ENCODE measurements at regions of chr19 and their contacts with region 1.

Region 1: DNA sequence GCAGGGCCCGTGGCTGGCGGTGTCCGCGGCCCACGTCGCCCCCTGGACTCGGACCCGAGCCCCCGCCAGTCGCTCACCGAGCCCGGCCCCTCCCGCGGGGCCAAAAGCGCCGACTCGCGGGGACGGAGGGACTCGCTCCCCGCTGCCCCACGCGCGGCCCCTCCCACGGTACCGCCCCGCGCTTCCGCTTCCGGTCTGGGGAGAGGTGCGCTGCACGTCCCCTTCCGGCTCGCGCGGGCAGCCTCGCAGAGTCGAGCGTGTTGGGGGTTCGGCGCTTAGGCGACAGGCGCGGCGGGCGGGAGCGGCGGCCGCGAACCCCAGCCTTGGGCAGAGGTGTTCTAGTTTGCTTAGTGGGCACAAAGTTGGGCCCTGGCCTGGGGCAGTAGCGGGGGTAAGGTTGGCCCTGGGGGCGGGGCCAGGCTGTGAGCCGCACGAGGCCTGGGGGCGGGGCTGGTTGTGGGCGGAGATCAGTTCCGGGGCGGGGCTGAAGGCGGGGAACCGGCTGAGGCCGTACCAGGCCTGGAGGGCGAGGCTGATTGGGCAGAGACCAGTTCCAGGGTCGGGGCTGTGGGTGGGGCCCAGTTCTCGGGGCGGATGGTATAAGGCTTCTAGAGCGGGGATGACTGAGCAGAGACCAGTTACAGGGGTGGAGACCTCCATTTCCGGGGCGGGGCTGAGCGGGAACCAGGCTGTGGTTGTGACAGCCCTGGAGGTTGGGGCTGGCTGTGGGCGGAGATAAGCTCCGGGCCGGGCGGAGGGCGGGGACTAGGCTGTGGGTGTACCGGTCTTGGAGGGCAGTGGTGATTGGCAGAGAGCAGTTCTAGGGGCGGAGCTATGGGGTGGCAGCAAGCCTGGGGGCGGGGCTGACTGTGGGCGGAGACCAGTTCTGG is at the starts of genes MBD3L1 and ZNF558:
- DNase-seq: peak; percentile 100
- H3K4me3 Mint-ChIP-seq: peak within 1 kb of the TSS; percentile 82
- H3K27ac Mint-ChIP-seq: peak within 1 kb of the TSS; percentile 86
- H3K4me1 Mint-ChIP-seq: peaks cover 19% of the 10 kb centered on the region
- H3K27me3 Mint-ChIP-seq: no peaks in the 10 kb centered on the region
- total RNA-seq, gene MBD3L1: not detected
- total RNA-seq, gene ZNF558: 23.9 to 24.4 TPM

Region 2: DNA sequence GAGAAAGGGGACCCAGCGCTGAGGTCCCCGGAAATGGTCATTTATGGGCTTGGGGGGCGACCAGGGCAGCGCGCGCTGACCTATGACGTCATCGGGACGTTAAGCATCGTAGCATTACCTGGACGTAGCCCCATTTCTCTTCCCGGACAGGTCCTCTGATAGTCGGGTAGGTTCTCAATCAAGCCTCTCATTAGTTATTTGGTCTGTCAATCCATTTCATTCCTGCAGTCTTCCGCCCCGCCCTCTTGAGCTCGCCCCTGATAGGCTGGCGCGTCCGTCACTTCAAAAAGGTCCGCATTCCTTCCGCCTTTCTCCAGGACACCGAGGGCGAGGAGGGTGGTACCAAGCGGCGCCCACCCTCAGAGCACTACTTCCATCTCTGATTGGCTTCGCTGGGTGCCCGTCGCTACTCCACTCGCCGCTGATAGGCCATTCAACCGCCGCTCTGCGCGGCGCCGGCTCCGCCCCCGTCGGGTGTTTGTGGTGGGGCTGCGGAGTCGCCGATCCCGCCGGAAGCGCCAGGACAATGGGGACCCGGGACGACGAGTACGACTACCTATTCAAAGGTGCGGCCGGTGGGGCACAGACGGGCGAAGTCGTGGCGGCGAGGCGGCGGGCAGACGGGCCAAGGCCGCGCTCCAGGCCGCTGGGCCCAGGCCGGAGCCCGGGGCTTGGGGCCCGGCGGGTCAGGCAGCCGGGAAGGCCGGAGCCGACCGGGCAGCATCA is 442.3 kb before region 1 on chr19 and contains the start of gene RAB11B:
- CTCF ChIA-PET with region 1: no interaction called
- intact Hi-C with region 1: loop called (anchors 1 kb)
- DNase-seq: peak; percentile 100
- H3K4me3 Mint-ChIP-seq: peak within 1 kb of the TSS; percentile 93
- H3K27ac Mint-ChIP-seq: peak within 1 kb of the TSS; percentile 96
- H3K4me1 Mint-ChIP-seq: peaks cover 25% of the 10 kb centered on the region
- H3K27me3 Mint-ChIP-seq: no peaks in the 10 kb centered on the region
- total RNA-seq, gene RAB11B: 61.9 to 69.6 TPM

Region 3: GRCh38 chr19:8513687-8514504 is 318.5 kb before region 1 on chr19 and contains the start of gene ZNF414:
- CTCF ChIA-PET with region 1: no interaction called
- intact Hi-C with region 1: loop called (anchors 2 kb)
- DNase-seq: peak; percentile 98
- H3K4me3 Mint-ChIP-seq: peak within 1 kb of the TSS; percentile 97
- H3K27ac Mint-ChIP-seq: peak within 1 kb of the TSS; percentile 97
- H3K4me1 Mint-ChIP-seq: peaks cover 47% of the 10 kb centered on the region
- H3K27me3 Mint-ChIP-seq: no peaks in the 10 kb centered on the region
- total RNA-seq, gene ZNF414: 19.8 to 24.1 TPM

Region 4: GRCh38 chr19:8592231-8593009 is 240.0 kb before region 1 on chr19:
- CTCF ChIA-PET with region 1: no interaction called
- intact Hi-C with region 1: loop called (anchors 5 kb)
- DNase-seq: peak; percentile 98
- H3K4me3 Mint-ChIP-seq: peak overlapping the region; percentile 78
- H3K27ac Mint-ChIP-seq: no peak overlapping the region
- H3K4me1 Mint-ChIP-seq: peaks cover 10% of the 10 kb centered on the region
- H3K27me3 Mint-ChIP-seq: no peaks in the 10 kb centered on the region

Region 5: DNA sequence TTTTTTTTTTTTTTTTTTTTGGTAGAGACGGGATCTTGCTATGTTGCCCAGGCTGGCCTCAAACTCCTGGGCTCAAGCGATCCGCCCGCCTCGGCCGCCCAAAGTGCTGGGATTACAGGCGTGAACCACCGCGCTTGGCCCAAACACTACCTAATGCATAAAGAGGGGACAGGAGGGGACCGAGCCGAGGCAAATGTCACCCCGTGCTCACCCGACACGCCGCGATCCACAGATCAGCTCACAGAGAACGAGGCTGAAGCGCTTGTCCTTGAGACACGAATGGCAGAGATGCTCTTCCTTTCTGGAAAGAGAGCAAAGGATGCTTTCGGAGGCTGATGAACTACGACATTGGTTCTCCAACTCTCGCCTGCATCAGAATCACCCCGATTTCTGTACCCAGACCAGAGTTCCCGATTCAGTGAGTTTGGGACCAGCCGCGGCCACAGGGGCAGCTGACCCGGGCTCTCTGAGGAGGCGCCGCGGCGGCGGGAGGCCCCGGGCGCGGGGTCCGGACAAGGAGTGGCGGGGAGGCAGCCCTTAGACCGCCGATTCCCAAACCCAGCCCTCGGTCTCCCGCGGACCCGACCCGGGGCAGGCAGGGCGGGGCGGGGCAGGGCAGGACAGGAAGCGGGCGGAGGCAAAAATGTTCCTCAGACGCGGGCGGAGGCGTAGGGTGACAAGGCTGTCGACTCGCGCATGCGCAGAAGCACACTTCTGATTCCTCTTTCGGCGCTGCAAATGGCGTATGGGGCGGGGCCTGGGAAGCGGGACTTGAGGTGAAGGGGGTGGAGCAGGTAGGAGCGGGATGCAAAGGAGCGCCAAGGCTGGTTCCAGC is 477.0 kb after region 1 on chr19 and contains the start of gene ZNF699:
- CTCF ChIA-PET with region 1: no interaction called
- intact Hi-C with region 1: loop called (anchors 5 kb)
- DNase-seq: peak; percentile 99
- H3K4me3 Mint-ChIP-seq: peak within 1 kb of the TSS; percentile 86
- H3K27ac Mint-ChIP-seq: peak within 1 kb of the TSS; percentile 97
- H3K4me1 Mint-ChIP-seq: peaks cover 12% of the 10 kb centered on the region
- H3K27me3 Mint-ChIP-seq: peaks cover 2% of the 10 kb centered on the region
- total RNA-seq, gene ZNF699: 4.6 to 6.4 TPM

Region 6: DNA sequence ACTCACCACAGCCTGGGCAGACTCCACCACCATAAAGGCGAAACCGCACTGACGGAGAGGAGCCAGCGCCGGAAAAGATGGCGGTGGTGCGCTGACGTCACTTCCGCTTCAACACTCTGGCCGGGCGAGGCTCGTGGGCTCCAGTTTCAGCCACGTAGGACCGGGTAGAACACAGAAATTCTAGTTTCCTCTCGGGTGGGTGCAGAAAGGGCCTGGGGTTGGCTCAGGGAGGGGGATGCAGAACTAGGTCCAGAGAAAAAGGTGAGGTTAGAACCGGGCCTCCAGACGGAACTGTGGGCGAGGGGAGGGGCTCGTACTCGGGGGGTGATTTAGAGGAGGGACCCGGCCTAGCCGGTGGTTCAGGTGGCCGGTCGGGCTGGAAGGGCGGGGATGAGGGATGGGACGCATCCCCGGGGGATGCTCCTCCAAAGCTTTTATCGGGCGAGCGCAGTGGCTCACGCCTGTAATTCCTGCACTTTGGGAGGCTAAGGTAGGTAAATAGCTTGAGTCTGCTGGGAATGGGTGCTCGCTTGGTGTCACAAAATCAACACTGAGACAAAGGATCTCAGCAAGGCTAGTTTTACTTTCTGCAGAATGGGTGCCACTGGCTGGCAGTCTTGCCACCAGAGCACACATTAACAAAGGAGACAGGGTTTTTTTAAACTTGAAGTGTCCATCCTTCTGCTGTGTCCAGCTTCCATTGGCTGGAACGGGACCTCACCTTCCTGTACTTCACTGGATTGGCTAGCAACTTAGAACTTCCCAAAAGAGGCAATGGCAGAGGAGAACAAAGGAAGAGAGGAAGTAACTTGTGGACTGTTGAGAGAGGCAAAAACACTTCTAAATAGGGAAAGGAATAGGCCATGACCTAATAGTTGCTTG is 789.0 kb after region 1 on chr19 and contains the start of gene ZNF561:
- CTCF ChIA-PET with region 1: no interaction called
- intact Hi-C with region 1: loop called (anchors 5 kb)
- DNase-seq: peak; percentile 90
- H3K4me3 Mint-ChIP-seq: peak within 1 kb of the TSS; percentile 98
- H3K27ac Mint-ChIP-seq: peak within 1 kb of the TSS; percentile 99
- H3K4me1 Mint-ChIP-seq: peaks cover 18% of the 10 kb centered on the region
- H3K27me3 Mint-ChIP-seq: no peaks in the 10 kb centered on the region
- total RNA-seq, gene ZNF561: 28.7 to 29.4 TPM